Posterior vena cava (tissue), 2 donors: ENCODE measurements at regions of chr3 and their contacts with region 1.

Region 1: GRCh38 chr3:10389995-10390394 is 69.1 kb upstream of the SEC13 start:
- DNase-seq: peak; percentile 16

Region 2: DNA sequence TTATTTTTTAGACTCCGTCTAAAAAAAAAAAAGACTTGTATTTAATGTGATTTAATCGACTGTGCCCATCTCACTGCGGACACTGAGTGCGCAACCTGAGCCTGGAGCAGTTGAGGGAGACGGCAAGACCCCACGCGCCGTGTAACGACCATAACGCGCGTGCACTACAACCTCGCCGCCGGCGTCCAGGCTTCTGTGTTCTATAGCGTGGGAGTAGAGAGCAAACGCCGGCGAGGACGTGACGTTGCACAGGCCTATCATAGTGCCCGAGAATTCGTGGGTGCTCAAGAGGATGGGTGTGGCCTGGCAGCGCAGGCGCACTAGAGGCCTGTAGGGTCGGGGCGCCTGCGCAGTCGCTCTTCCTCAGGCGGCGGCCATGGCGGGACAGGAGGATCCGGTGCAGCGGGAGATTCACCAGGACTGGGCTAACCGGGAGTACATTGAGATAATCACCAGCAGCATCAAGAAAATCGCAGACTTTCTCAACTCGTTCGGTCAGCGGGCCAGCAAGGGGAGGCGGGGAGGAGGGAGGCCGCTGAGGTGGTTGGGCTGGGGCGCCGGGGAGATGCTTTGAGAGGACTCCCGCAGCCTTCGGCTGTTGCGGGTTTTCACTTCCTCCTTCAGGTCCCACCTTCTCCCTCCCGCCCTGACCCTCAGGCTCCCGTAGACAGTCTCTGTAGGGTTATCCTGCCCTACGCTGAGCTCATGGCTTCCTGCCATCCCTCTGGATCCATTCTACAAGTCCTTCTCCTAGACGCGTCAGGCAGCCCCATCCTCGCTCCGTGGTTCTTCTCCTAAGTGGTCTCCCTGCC is 274.5 kb before region 1 on chr3 and contains the start of gene BRK1:
- intact Hi-C with region 1: loop called in 1 of 2 experiments (anchors 10 kb)
- DNase-seq: peak; percentile 98
- total RNA-seq, gene BRK1: 98.9 to 125 TPM

Region 3: DNA sequence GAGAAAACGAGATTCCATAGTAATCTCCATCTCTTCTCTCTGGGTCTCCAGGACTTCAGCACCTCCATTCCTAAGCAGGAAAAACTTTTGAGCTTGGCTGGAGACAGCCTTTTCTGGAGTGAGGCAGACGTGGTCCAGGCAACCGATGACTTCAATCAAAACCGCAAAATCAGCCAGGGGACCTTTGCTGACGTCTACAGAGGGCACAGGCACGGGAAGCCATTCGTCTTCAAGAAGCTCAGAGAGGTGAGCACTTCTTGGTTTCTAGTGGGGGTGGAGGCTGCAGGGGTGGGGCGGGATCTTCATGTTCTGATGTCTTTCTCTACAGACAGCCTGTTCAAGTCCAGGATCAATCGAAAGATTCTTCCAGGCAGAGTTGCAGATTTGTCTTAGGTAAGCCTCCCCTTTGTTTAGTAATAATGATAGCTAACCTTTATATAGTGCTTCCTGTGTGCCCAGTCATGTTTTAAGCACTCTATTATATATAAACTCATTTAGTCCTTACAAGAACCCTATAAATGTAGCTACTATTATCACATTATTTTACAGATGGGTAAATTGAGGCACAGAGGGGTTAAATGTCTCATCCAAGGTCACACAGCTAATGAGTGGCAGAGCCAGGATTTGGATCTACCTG is 176.7 kb before region 1 on chr3:
- intact Hi-C with region 1: no loop called
- DNase-seq: no peak

Region 4: GRCh38 chr3:10310578-10310977 is 79.4 kb before region 1 on chr3:
- intact Hi-C with region 1: no loop called
- DNase-seq: no peak

Region 5: DNA sequence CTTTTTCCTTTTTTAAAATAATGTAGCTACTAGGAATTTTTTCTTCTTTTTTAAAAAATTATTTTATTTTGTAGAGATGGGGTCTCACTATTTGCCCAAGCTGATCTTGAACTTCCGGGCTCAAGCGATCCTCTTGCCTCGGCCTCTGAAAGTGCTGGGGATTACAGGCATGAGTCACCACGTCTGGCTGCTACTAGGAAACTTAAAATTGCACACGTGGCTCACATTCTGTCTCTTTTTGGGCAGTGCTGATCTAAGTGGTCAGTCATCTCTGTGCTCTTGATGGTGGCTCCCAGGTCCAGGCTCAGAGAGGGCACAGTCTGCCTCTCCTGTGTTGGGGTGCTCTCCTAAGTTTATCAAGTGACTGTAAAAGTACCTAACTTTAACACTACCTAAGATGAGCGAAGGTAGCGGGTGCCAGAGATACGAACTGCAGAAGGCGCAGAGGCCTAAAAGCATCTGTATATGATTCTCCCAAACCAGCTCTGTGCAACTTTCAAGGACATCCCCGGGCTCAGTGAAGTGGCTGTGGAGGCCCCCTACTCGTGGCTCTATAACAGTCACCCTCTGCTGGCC is 16.2 kb before region 1 on chr3:
- intact Hi-C with region 1: no loop called
- DNase-seq: peak; percentile 47

Region 6: GRCh38 chr3:10417849-10418248 is 27.9 kb after region 1 on chr3:
- intact Hi-C with region 1: no loop called
- DNase-seq: no peak